ENCODE measurements at regions of chr4 and their contacts with region 1.

Region 1: GRCh38 chr4:99405433-99406115 is 29.6 kb downstream of the ADH7 start:
- DNase-seq: peak; percentile 82
- ATAC-seq: peak; percentile 81
- H3K4me3 ChIP-seq: no peak overlapping the region
- H3K27ac ChIP-seq: peak overlapping the region; percentile 99; the same call in 1 of the 2 replicates
- H3K4me1 ChIP-seq: peaks cover 13% of the 10 kb centered on the region
- H3K27me3 ChIP-seq: no peaks in the 10 kb centered on the region
- CTCF ChIP-seq: peak; percentile 96
- POLR2A ChIP-seq: no peak
- RAD21 ChIP-seq: peak; percentile 97

Region 2: DNA sequence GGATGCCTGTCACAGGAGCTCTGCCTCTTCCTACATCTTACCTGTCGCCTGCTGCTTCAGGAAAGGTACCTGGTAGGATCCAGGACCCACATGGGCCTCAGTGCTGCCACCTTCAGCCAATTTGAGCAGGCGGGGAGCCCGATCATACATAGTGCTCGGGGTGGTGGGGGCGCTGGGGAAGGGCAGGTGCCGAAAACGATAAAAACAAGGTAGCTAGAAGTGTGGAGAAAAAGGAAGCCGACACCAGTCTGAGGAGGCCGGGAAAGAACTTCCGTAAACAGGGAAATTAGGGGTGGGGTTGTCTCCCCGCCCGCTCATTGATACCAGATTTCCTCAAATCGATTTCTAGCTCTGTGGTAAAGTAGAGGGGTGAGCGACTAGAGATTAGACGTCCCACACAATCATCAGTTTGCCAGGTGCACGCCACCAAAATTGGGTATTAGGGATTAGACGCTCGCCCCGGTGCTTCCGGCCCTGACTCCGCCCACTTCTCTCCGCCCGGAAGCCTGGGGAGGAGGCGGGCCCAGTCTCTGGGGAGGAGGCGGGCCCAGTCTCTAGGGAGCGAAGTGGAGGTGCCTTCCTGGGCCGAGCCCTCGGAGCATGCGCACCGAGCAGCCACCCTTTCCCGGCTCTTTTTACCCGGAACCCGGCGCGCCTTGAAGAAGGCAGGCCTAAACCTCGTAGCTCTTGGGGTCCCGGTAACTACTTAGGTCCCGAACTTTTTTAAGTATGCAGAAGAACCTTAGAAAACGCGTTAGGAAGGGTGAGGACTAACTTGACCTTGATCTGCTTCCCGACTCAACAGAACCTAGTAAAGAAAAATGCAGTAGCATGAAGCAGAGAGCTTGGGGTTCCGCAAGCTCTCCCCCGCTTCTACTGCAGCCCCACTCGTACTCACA is 1262.3 kb before region 1 on chr4 and contains the start of gene STPG2:
- CTCF ChIA-PET with region 1: no interaction called
- POLR2A ChIA-PET with region 1: interaction called, 3 read pairs
- dilution Hi-C with region 1: no loop called
- in situ Hi-C with region 1: loop called (anchors 10 kb)
- intact Hi-C with region 1: no loop called
- DNase-seq: peak; percentile 81
- ATAC-seq: peak; percentile 100
- H3K4me3 ChIP-seq: peak within 1 kb of the TSS; percentile 82
- H3K27ac ChIP-seq: peak within 1 kb of the TSS; percentile 46; the same call in 1 of the 2 replicates
- H3K4me1 ChIP-seq: no peaks in the 10 kb centered on the region
- H3K27me3 ChIP-seq: no peaks in the 10 kb centered on the region
- CTCF ChIP-seq: peak; percentile 28
- POLR2A ChIP-seq: 0 out of 2 replicates have a peak, but pooled peaks have one; percentile 29
- RAD21 ChIP-seq: no peak
- total RNA-seq, gene STPG2: not detected in 2 replicates

Region 3: GRCh38 chr4:98995183-98996055 is 410.2 kb before region 1 on chr4 and contains the start of gene METAP1:
- CTCF ChIA-PET with region 1: interaction called, 8 read pairs
- POLR2A ChIA-PET with region 1: no interaction called
- dilution Hi-C with region 1: no loop called
- in situ Hi-C with region 1: no loop called
- intact Hi-C with region 1: loop called (anchors 1 kb)
- DNase-seq: peak; percentile 92
- ATAC-seq: peak; percentile 95
- H3K4me3 ChIP-seq: peak within 1 kb of the TSS; percentile 98
- H3K27ac ChIP-seq: peak within 1 kb of the TSS; percentile 98
- H3K4me1 ChIP-seq: no peaks in the 10 kb centered on the region
- H3K27me3 ChIP-seq: no peaks in the 10 kb centered on the region
- CTCF ChIP-seq: peak; percentile 73
- POLR2A ChIP-seq: peak; percentile 55; the same call in 1 of the 2 replicates
- RAD21 ChIP-seq: peak; percentile 67
- total RNA-seq, gene METAP1: 43.7 and 76.1 TPM in 2 replicates

Region 4: GRCh38 chr4:99117876-99118693 is 287.5 kb before region 1 on chr4:
- CTCF ChIA-PET with region 1: interaction called, 7 read pairs
- POLR2A ChIA-PET with region 1: no interaction called
- dilution Hi-C with region 1: no loop called
- in situ Hi-C with region 1: loop called (anchors 5 kb)
- intact Hi-C with region 1: loop called (anchors 1 kb)
- DNase-seq: peak; percentile 35
- ATAC-seq: peak; percentile 37; the same call in 1 of the 2 replicates
- H3K4me3 ChIP-seq: no peak overlapping the region
- H3K27ac ChIP-seq: no peak overlapping the region; the same call in 1 of the 2 replicates
- H3K4me1 ChIP-seq: no peaks in the 10 kb centered on the region
- H3K27me3 ChIP-seq: no peaks in the 10 kb centered on the region
- CTCF ChIP-seq: peak; percentile 54
- POLR2A ChIP-seq: no peak
- RAD21 ChIP-seq: peak; percentile 54

Region 5: GRCh38 chr4:99201690-99202089 is 203.9 kb before region 1 on chr4:
- CTCF ChIA-PET with region 1: interaction called, 21 read pairs
- POLR2A ChIA-PET with region 1: no interaction called
- dilution Hi-C with region 1: no loop called
- in situ Hi-C with region 1: loop called (anchors 5 kb)
- intact Hi-C with region 1: loop called (anchors 1 kb)
- DNase-seq: peak; percentile 55
- ATAC-seq: peak; percentile 68
- H3K4me3 ChIP-seq: no peak overlapping the region
- H3K27ac ChIP-seq: peak overlapping the region; percentile 23; the same call in 1 of the 2 replicates
- H3K4me1 ChIP-seq: peaks cover 12% of the 10 kb centered on the region
- H3K27me3 ChIP-seq: no peaks in the 10 kb centered on the region
- CTCF ChIP-seq: peak; percentile 59
- POLR2A ChIP-seq: no peak
- RAD21 ChIP-seq: peak; percentile 54

Region 6: DNA sequence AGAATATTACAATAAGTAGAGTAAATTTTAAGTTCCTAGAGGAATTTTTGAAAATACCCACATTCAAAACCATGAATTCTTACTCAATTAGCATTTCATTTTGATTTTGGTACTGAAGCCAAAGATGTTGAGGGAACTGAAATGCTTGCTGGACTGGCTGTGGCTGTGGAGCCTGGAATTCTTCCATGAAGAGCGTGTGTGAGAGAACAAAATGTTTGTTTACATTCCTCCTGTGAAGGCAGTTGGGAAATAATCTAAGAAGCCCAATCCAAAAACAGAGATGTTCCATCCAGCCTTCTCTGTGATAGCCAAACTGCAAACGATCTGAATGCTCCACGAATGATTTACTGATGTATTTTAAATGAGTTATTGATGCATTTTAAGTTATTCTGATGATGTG is 80.6 kb before region 1 on chr4:
- CTCF ChIA-PET with region 1: no interaction called
- POLR2A ChIA-PET with region 1: no interaction called
- dilution Hi-C with region 1: no loop called
- in situ Hi-C with region 1: no loop called
- intact Hi-C with region 1: loop called (anchors 2 kb)
- DNase-seq: peak; percentile 83
- ATAC-seq: peak; percentile 81
- H3K4me3 ChIP-seq: no peak overlapping the region
- H3K27ac ChIP-seq: no peak overlapping the region; the same call in 1 of the 2 replicates
- H3K4me1 ChIP-seq: peaks cover 9% of the 10 kb centered on the region; the same call in 1 of the 2 replicates
- H3K27me3 ChIP-seq: no peaks in the 10 kb centered on the region
- CTCF ChIP-seq: no peak
- POLR2A ChIP-seq: no peak
- RAD21 ChIP-seq: no peak

Region 7: GRCh38 chr4:99457270-99457669 is 51.7 kb after region 1 on chr4:
- CTCF ChIA-PET with region 1: interaction called, 3 read pairs
- POLR2A ChIA-PET with region 1: no interaction called
- dilution Hi-C with region 1: no loop called
- in situ Hi-C with region 1: no loop called
- intact Hi-C with region 1: loop called (anchors 1 kb)
- DNase-seq: no peak
- ATAC-seq: peak; percentile 72
- H3K4me3 ChIP-seq: no peak overlapping the region
- H3K27ac ChIP-seq: no peak overlapping the region
- H3K4me1 ChIP-seq: no peaks in the 10 kb centered on the region
- H3K27me3 ChIP-seq: peaks cover 3% of the 10 kb centered on the region; the same call in 1 of the 2 replicates
- CTCF ChIP-seq: peak; percentile 34
- POLR2A ChIP-seq: no peak
- RAD21 ChIP-seq: no peak